HCT116 (cell line): ENCODE measurements at regions of chr14 and their contacts with region 1.

Region 1: DNA sequence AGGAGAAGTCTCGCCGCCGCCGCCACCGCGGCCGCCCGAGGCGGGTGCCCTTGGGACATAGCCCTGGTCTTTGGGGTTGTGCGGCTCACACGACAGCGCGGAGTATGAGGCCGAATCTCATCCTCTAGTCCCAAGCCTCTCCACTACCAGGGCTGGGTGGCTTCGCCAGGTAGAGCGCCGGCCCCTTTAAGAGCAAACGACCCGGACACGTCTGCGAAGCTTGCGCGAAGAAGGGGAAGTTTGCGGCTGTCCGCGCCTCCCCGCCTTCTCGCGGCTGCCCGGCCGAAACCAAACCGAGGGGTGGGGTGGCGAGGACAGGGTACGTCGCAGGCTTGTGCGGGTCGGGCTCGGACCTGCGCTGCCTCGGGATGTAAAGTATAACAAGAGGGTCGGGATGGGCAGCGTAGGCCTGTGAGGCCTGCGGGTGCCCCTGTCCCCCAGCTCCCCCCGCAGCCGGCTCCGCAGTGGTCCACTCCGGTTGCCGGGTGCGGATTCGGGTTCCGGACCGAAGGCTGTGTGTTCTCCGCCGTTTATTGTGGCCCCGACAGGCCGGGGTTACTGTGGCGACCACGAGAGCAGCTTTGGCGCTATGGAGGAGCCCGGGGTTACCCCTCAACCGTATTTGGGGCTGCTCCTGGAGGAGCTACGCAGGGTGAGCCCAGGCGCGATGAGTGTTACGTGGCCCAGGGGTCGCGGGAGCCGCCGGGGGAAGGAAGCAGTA is 33.3 kb downstream of the MIA2 start:
- DNase-seq: peak; percentile 85
- ATAC-seq: peak; percentile 89
- H3K4me3 ChIP-seq: peak overlapping the region; percentile 85 to 93
- H3K27ac ChIP-seq: peak overlapping the region; percentile 91
- H3K4me1 ChIP-seq: peaks cover 26 to 51% of the 10 kb centered on the region in 2 experiments
- H3K27me3 ChIP-seq: no peaks in the 10 kb centered on the region
- CTCF ChIP-seq: no peak
- POLR2A ChIP-seq: peak; percentile 40
- RAD21 ChIP-seq: no peak

Region 2: DNA sequence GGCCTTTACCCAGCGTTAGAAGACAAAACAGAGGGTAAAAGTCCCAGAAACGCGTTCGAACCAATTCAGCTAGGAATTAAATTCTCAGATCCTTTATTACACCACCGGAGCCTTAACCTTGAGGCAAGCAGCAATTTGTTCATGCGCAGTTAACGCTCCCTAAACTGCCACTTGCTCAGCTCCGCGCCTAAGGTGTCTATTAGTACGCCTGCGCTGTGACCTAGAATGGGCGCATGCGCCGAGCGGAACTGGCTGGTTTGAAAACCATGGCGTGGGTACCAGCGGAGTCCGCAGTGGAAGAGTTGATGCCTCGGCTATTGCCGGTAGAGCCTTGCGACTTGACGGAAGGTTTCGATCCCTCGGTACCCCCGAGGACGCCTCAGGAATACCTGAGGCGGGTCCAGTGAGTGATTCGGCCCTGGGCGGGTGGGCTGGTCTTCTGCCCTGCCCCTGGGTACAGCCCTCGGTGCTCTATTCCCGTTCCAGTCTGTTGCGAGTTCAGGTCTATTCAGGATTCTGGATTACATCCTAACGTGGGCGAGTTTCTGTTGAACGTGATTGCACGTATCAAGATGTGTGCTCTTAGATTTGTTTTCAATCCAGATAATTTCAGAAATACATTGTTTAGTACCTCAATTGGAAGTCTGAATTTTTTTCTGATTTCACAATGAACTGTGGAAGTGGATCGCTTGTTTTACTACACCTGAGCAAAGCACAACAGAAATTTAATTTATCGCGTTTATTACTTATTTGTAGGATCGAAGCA is 152.8 kb before region 1 on chr14 and contains the start of gene GEMIN2:
- CTCF ChIA-PET with region 1: no interaction called
- POLR2A ChIA-PET with region 1: no interaction called
- RAD21 ChIA-PET with region 1: no interaction called
- intact Hi-C with region 1: loop called (anchors 5 kb)
- DNase-seq: peak; percentile 88
- ATAC-seq: peak; percentile 97
- H3K4me3 ChIP-seq: peak within 1 kb of the TSS; percentile 65 to 84
- H3K27ac ChIP-seq: peak within 1 kb of the TSS; percentile 63
- H3K4me1 ChIP-seq: peaks cover 4 to 16% of the 10 kb centered on the region in 2 experiments; a peak in 3 of 4 replicates
- H3K27me3 ChIP-seq: no peaks in the 10 kb centered on the region
- CTCF ChIP-seq: no peak
- POLR2A ChIP-seq: peak; percentile 96
- RAD21 ChIP-seq: no peak
- total RNA-seq, gene GEMIN2: 27.3 TPM

Region 3: DNA sequence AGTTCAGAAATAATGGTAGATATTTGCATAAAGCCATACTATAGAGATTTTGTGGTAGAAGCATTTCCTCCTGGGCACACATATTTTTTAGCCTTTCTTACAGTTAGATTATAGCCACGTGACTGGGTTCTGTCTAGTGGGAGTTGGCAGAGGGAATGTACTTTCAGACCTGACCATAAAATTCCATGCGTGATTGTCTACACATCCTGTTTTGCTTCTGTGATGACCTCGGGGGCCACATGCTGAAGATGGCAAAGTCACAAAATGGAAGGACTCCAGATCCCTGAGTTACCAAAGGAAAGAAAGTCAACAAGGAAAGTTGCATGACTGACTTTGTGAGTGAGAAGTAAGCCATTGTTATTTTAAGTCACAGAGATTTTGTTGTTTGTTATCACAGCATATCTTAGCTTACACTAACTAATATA is 47.9 kb before region 1 on chr14:
- CTCF ChIA-PET with region 1: no interaction called
- POLR2A ChIA-PET with region 1: interaction called, 3 read pairs
- RAD21 ChIA-PET with region 1: no interaction called
- intact Hi-C with region 1: loop called (anchors 5 kb)
- DNase-seq: peak; percentile 32
- ATAC-seq: peak; percentile 35
- H3K4me3 ChIP-seq: peak overlapping the region in 1 of 2 experiments; percentile 22; a peak in 2 of 4 replicates
- H3K27ac ChIP-seq: peak overlapping the region; percentile 80
- H3K4me1 ChIP-seq: peaks cover 29 to 57% of the 10 kb centered on the region in 2 experiments
- H3K27me3 ChIP-seq: no peaks in the 10 kb centered on the region
- CTCF ChIP-seq: no peak
- POLR2A ChIP-seq: no peak
- RAD21 ChIP-seq: no peak

Region 4: DNA sequence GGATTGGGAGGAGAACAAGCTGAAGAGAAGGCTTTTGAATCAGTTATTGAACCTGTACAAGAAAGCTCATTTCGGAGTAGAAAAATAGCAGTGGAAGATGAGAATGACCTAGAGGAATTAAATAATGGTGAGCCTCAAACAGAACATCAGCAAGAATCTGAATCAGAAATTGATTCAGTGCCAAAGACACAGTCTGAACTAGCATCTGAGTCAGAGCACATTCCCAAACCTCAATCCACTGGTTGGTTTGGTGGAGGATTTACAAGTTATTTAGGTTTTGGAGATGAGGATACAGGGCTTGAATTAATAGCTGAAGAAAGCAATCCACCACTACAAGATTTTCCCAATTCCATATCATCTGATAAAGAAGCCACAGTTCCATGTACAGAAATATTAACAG is 19.8 kb before region 1 on chr14:
- CTCF ChIA-PET with region 1: no interaction called
- POLR2A ChIA-PET with region 1: no interaction called
- RAD21 ChIA-PET with region 1: no interaction called
- intact Hi-C with region 1: no loop called
- DNase-seq: no peak
- ATAC-seq: no peak
- H3K4me3 ChIP-seq: no peak overlapping the region
- H3K27ac ChIP-seq: no peak overlapping the region
- H3K4me1 ChIP-seq: peaks cover 2 to 7% of the 10 kb centered on the region in 2 experiments; a peak in 1 of 4 replicates
- H3K27me3 ChIP-seq: no peaks in the 10 kb centered on the region
- CTCF ChIP-seq: no peak
- POLR2A ChIP-seq: no peak
- RAD21 ChIP-seq: no peak

Region 5: GRCh38 chr14:39432179-39432618 is 165.2 kb after region 1 on chr14 and contains the start of gene FBXO33:
- CTCF ChIA-PET with region 1: no interaction called
- POLR2A ChIA-PET with region 1: no interaction called
- RAD21 ChIA-PET with region 1: no interaction called
- intact Hi-C with region 1: loop called (anchors 5 kb)
- DNase-seq: peak; percentile 92
- ATAC-seq: peak; percentile 89
- H3K4me3 ChIP-seq: peak within 1 kb of the TSS; percentile 78 to 83
- H3K27ac ChIP-seq: peak within 1 kb of the TSS; percentile 82
- H3K4me1 ChIP-seq: peaks cover 14 to 21% of the 10 kb centered on the region in 2 experiments
- H3K27me3 ChIP-seq: no peaks in the 10 kb centered on the region
- CTCF ChIP-seq: no peak
- POLR2A ChIP-seq: peak; percentile 21
- RAD21 ChIP-seq: no peak
- total RNA-seq, gene FBXO33: 9.7 TPM